ENCODE measurements at regions of chr6 and their contacts with region 1.

Region 1: DNA sequence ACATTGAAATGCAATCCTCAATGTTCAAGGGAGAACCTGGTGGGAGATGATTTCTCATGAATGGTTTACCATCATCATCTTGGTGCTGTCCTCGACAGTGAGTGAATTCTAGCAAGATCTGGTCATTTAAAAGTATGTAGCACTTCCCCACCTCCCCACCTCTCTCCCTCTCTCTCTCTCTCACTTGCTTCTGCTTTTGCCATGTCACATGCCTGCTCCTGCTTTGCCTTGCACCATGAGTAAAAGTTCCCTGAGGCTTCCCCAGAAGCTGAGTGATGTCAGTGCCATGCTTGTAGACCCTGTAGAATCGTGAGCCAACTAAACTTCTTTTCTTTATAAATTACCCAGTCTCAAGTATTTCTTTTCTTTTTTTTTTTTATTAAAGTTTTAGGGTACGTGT is 60.5 kb downstream of the DST start:
- DNase-seq: no peak
- ATAC-seq: no peak
- H3K4me3 ChIP-seq: no peak overlapping the region
- H3K27ac ChIP-seq: no peak overlapping the region
- H3K4me1 ChIP-seq: no peaks in the 10 kb centered on the region
- H3K27me3 ChIP-seq: no peaks in the 10 kb centered on the region
- CTCF ChIP-seq: no peak

Region 2: GRCh38 chr6:56406276-56407269 is 175.7 kb before region 1 on chr6:
- CTCF ChIA-PET with region 1: interaction called, 10 read pairs
- POLR2A ChIA-PET with region 1: no interaction called
- in situ Hi-C with region 1: no loop called
- intact Hi-C with region 1: no loop called
- DNase-seq: no peak
- ATAC-seq: no peak
- H3K4me3 ChIP-seq: no peak overlapping the region
- H3K27ac ChIP-seq: no peak overlapping the region
- H3K4me1 ChIP-seq: no peaks in the 10 kb centered on the region
- H3K27me3 ChIP-seq: peaks cover 3% of the 10 kb centered on the region; the same call in 1 of the 2 replicates
- CTCF ChIP-seq: no peak

Region 3: GRCh38 chr6:56808871-56809359 is 226.7 kb after region 1 on chr6:
- CTCF ChIA-PET with region 1: no interaction called
- POLR2A ChIA-PET with region 1: no interaction called
- in situ Hi-C with region 1: no loop called
- intact Hi-C with region 1: no loop called
- DNase-seq: no peak
- ATAC-seq: peak; percentile 84
- H3K4me3 ChIP-seq: no peak overlapping the region
- H3K27ac ChIP-seq: peak overlapping the region; percentile 60; the same call in 1 of the 2 replicates
- H3K4me1 ChIP-seq: peaks cover 52% of the 10 kb centered on the region
- H3K27me3 ChIP-seq: no peaks in the 10 kb centered on the region
- CTCF ChIP-seq: no peak